ENCODE measurements at regions of chr17 and their contacts with region 1.

Region 1: DNA sequence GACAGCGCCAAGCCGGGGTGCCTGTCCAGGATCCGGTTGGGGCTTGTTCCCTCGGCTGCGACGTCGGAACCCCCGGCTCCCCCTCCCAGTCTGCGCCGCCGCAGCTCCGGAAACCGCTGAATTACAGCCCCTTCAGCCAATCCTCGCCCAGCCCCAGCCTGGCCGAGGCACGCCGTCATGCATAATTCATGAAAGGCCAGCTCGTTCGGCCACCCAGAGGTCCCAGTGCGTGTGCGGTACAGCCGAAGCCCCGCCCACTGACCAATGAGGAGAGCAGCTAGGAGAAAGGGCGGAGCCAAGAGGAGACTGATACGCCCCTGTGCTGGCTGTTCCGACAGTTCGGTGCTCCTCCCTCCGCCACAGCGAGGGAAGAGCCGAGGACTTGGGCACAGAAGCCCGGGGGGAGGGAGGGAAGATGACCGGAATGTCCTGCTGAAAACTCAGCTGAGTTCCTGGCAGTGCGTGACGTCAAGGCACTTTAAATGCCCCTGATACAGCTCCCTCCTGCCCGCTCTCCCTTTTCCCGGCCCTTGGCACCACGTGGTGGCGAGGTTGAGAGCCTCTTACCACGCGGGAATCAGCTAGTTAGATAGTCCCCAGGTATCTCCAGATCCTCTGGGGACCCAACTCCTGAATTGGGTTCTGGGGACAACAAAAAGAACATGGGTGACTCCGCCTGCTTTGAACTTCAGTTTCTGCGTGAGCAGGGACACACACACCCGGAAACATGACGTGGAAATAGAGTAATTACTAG is at the start of gene STAT3:
- DNase-seq: peak; percentile 100
- H3K4me3 ChIP-seq: peak within 1 kb of the TSS; percentile 70 to 85 (median 78)
- H3K27ac ChIP-seq: peak within 1 kb of the TSS; percentile 69
- H3K4me1 ChIP-seq: peaks cover 16% of the 10 kb centered on the region
- H3K27me3 ChIP-seq: no peaks in the 10 kb centered on the region
- CTCF ChIP-seq: no peak
- total RNA-seq, gene STAT3: 94.3 to 191 TPM

Region 2: GRCh38 chr17:42312285-42313130 is 76.0 kb before region 1 on chr17:
- CTCF ChIA-PET with region 1: no interaction called
- dilution Hi-C with region 1: loop called (anchors 5 kb)
- in situ Hi-C with region 1: no loop called
- intact Hi-C with region 1: no loop called
- DNase-seq: peak; percentile 48
- H3K4me3 ChIP-seq: no peak overlapping the region
- H3K27ac ChIP-seq: no peak overlapping the region
- H3K4me1 ChIP-seq: peaks cover 13% of the 10 kb centered on the region
- H3K27me3 ChIP-seq: no peaks in the 10 kb centered on the region
- CTCF ChIP-seq: peak; percentile 40 to 78

Region 3: DNA sequence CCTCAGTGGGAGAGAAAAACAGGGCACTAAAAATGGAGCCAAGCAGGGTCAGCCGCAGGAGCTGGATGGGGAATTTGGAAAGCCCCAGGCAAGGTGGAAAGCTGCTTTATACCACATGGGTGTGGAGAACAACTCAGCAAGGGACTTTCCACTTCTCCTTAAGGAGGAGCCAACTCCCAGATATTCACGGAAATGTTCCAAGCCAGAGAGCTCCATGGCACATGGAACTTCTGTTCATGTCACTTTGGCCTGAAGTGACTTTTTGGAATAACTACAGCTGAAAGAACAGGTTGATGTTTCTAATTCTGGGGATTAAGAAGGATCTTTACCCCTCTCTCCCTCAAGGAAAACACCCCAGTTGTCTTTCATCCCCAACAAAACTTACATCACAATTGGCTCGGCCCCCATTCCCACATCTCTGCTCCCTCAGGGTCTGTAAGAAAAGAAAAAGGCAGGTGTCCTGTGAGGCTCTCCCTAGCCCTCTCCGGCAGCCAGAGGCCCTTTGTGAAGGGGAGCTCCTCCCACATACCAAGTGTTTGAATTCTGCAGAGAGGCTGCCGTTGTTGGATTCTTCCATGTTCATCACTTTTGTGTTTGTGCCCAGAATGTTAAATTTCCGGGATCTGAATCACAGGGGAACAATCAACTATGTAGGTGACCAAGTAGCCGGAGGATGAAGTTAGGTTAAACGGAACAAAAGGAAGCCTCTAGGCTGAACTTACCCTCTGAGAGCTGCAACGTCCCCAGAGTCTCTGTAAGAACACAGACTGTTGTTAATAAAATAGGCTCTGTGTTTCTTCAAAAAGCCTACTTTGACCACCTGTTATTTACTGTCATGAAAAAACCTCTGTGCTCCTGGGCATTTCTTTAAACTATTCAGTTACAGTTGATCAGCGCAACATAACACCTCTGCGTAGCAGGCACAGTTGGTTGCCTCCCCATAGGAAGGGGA is 59.3 kb before region 1 on chr17:
- CTCF ChIA-PET with region 1: interaction called, 5 read pairs
- dilution Hi-C with region 1: no loop called
- in situ Hi-C with region 1: no loop called
- intact Hi-C with region 1: loop called (anchors 1 kb)
- DNase-seq: peak; percentile 90
- H3K4me3 ChIP-seq: no peak overlapping the region
- H3K27ac ChIP-seq: peak overlapping the region; percentile 88
- H3K4me1 ChIP-seq: peaks cover 37% of the 10 kb centered on the region
- H3K27me3 ChIP-seq: no peaks in the 10 kb centered on the region
- CTCF ChIP-seq: no peak

Region 4: DNA sequence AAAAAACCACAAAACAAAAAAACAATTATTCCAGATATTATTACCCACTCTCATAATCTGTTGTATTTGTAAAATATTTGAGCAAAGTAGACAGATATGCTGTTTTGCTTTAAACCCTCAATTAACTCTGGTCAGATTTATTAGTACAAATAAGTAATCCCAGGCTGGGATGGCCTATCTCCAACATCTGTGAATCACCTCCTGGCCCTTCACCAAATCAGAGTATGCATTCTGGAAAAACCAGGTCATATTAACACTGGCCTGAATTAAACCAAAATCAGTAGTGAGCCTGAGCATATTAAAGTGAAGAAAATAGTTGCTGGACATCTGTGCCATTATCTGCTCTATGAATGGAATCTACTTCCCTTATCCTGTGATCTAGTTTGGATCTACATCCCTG is 41.4 kb before region 1 on chr17:
- CTCF ChIA-PET with region 1: no interaction called
- dilution Hi-C with region 1: no loop called
- in situ Hi-C with region 1: no loop called
- intact Hi-C with region 1: loop called (anchors 1 kb)
- DNase-seq: peak; percentile 77
- H3K4me3 ChIP-seq: no peak overlapping the region
- H3K27ac ChIP-seq: no peak overlapping the region
- H3K4me1 ChIP-seq: peaks cover 11% of the 10 kb centered on the region
- H3K27me3 ChIP-seq: no peaks in the 10 kb centered on the region
- CTCF ChIP-seq: no peak

Region 5: DNA sequence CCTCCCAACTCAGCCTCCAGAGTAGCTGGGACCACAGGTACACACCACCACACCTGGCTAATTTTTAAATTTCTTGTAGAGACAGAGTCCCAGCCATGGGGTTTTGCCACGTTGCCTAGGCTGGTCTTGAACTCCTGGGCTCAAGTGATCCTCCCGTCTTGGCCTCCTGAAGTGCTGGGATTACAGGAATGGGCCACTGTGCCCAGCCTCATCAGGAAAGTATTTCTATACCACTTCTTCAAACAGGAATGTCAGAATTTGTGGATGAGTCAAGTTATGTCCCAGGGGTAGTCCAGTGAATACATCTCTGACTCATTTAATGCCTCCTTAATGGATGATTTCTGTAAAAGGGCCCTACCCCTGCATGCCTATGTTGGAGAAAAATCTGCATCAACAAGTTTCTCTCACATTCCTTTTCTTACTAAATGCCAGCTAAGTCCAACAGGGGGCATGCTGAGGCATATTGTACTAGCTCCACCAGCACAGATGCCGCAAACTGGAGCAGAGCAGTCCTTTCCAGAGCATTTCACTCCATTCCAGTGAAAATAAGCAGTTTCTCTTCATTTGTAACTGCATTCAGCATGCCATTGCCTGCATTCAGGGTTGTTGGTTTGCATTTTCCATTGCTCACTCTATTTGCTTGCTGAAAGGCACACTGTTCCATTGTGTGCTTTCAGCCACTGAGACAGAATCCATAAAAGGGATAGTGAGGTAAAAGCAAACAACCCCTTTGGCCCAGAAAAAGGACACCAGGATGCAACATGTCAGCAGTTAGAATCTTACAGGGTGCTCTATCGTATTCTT is 39.8 kb after region 1 on chr17:
- CTCF ChIA-PET with region 1: no interaction called
- dilution Hi-C with region 1: no loop called
- in situ Hi-C with region 1: no loop called
- intact Hi-C with region 1: loop called (anchors 1 kb)
- DNase-seq: peak; percentile 98
- H3K4me3 ChIP-seq: peak overlapping the region in 1 of 3 experiments; percentile 22
- H3K27ac ChIP-seq: peak overlapping the region; percentile 64
- H3K4me1 ChIP-seq: peaks cover 11% of the 10 kb centered on the region
- H3K27me3 ChIP-seq: no peaks in the 10 kb centered on the region
- CTCF ChIP-seq: peak; percentile 85 to 95